Activated CD4-positive, alpha-beta T cell treated with anti-CD3 and anti-CD28 coated beads, Interleukin-2, amount 10 ng/mL, durations not matched to agents 7 days and 5 days (primary cell): ENCODE measurements at regions of chr5 and their contacts with region 1.

Region 1: DNA sequence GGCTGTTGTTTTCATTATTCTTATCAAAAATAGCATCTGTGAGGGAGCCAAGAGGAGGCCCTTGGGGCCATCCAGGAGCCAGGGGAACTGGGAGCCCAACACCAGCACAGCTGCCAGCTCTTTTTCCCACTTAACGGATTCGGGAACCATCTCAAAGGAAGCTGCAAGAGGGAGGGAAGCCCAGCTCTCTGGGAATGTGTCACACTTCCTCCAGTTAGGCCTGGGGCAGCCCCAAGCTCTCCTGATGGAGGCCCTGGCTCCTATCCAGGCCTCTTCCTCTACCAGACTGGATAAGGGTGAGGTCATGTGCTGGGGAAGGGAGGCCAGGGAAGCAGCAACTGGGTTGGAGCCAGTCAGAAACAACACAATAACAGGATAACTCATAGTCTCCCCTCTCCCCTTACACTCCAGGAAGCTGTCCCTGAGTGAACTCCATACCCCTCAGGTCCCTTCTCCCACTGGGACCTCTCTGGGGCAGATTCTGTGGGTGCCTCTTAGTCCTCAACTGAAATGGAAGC is 12.7 kb downstream of the CSF2 start:
- DNase-seq: no peak
- H3K4me3 Mint-ChIP-seq: no peak overlapping the region
- H3K27ac Mint-ChIP-seq: no peak overlapping the region
- H3K4me1 Mint-ChIP-seq: peaks cover 46% of the 10 kb centered on the region
- H3K27me3 Mint-ChIP-seq: no peaks in the 10 kb centered on the region

Region 2: DNA sequence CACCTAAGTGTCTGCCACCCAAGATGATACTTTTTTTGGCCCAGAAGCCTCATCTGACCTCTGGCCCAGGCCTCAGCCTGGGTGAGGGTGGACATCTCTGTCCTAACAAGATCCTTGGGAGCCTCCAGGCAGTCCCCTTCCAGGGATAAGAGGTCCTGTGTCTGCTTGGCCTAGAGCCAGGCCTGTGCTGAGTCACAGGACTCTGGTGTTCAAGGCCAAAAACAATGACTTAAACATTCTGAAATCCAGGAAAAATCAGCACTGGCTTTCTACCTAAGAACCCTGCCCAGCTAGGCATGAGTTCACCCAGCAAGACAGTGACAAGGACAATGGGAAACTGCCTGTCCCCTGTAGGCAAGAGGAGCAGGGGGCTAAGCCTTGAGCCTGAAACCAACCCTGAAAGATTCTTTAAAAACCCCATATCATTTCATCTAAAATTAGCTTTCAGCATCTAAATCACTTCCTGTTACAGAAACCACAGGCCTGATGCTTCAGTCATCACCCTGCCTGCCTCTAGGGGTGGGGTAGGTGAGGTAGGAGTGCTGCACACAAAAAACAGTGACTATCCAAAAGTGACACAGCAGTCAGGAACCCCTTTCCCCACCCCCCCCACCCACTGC is 17.1 kb after region 1 on chr5:
- CTCF ChIA-PET with region 1: interaction called, 13 read pairs
- POLR2A ChIA-PET with region 1: no interaction called
- DNase-seq: peak; percentile 85
- H3K4me3 Mint-ChIP-seq: peak overlapping the region; percentile 49
- H3K27ac Mint-ChIP-seq: peak overlapping the region; percentile 96
- H3K4me1 Mint-ChIP-seq: peaks cover 76% of the 10 kb centered on the region
- H3K27me3 Mint-ChIP-seq: no peaks in the 10 kb centered on the region